Naive thymus-derived CD4-positive, alpha-beta T cell (primary cell): ENCODE measurements at regions of chr10 and their contacts with region 1.

Region 1: DNA sequence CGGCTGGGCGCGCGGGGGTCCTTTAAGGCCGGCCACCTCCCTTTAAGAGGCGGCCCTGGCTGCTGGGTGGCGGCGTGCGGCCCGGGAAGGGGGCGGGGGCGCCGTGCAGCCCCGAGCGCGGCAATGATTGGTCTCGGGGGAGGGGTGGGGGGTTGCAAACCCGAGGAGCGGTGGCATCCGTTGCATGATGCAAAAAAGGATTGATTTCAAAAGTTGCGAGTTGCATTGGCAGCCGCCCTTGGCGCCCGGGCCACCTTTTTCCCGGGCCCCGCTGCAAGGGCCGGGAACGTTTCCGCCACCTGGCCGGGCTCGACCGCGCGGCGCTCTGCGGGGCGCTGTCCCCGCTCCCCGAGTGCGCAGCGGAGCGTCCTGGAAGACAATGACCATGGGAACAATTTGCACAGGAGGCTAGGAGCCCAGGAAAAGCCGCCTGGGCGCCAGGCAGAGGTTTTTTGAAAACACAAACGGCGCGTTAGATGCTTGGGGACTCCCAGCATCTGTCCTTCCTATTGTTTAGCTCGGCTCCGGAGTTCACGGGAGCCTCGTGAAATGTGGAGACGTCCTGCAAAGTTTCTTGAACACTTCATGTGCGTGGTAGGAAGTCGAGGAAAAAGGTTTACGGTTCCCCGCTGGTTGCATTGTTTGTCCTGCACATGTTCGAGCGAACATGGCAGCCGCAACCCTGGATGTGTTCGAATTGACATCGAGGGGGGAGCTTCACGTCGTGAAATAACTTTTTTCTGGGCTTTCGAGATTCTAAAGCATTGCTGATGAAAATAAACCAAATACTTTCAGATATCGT is at the start of gene SEPHS1:
- DNase-seq: peak; percentile 62 to 87 (median 84)
- ATAC-seq: peak; percentile 83
- H3K4me3 ChIP-seq: peak within 1 kb of the TSS; percentile 95
- H3K4me3 Mint-ChIP-seq: peak within 1 kb of the TSS; percentile 92 to 99 (median 96)
- H3K27ac ChIP-seq: peak within 1 kb of the TSS; percentile 84
- H3K27ac Mint-ChIP-seq: peak within 1 kb of the TSS; percentile 90 to 98 (median 97)
- H3K4me1 ChIP-seq: peaks cover 18 to 36% of the 10 kb centered on the region in 2 donors
- H3K4me1 Mint-ChIP-seq: peaks cover 28 to 69% (median 62%) of the 10 kb centered on the region in 7 donors
- H3K27me3 ChIP-seq: no peaks in the 10 kb centered on the region
- H3K27me3 Mint-ChIP-seq: peaks cover 0 to 9% (median 0%) of the 10 kb centered on the region in 5 donors
- total RNA-seq, gene SEPHS1: 23.7 to 57.3 (median 36.5) TPM

Region 2: GRCh38 chr10:13099666-13100348 is 248.6 kb before region 1 on chr10 and contains the start of gene OPTN:
- CTCF ChIA-PET with region 1: interaction called, 4 read pairs
- POLR2A ChIA-PET with region 1: interaction called, 5 read pairs
- intact Hi-C with region 1: loop called (anchors 2 to 5 kb)
- DNase-seq: peak; percentile 61 to 85 (median 80)
- ATAC-seq: peak; percentile 90
- H3K4me3 ChIP-seq: peak within 1 kb of the TSS; percentile 82
- H3K4me3 Mint-ChIP-seq: peak within 1 kb of the TSS; percentile 83 to 97 (median 96)
- H3K27ac ChIP-seq: peak within 1 kb of the TSS; percentile 92
- H3K27ac Mint-ChIP-seq: peak within 1 kb of the TSS; percentile 88 to 98 (median 94)
- H3K4me1 ChIP-seq: peaks cover 6 to 21% of the 10 kb centered on the region in 2 donors
- H3K4me1 Mint-ChIP-seq: peaks cover 28 to 52% (median 49%) of the 10 kb centered on the region in 7 donors
- H3K27me3 ChIP-seq: no peaks in the 10 kb centered on the region
- H3K27me3 Mint-ChIP-seq: no peaks in the 10 kb centered on the region
- total RNA-seq, gene OPTN: 59.3 to 146 (median 60.0) TPM

Region 3: GRCh38 chr10:13206546-13207443 is 141.6 kb before region 1 on chr10:
- CTCF ChIA-PET with region 1: interaction called, 6 read pairs
- POLR2A ChIA-PET with region 1: no interaction called
- intact Hi-C with region 1: loop called in 1 of 2 experiments (anchors 1 kb)
- DNase-seq: no peak
- ATAC-seq: no peak
- H3K4me3 ChIP-seq: no peak overlapping the region
- H3K4me3 Mint-ChIP-seq: no peak overlapping the region
- H3K27ac ChIP-seq: no peak overlapping the region
- H3K27ac Mint-ChIP-seq: no peak overlapping the region
- H3K4me1 ChIP-seq: no peaks in the 10 kb centered on the region
- H3K4me1 Mint-ChIP-seq: no peaks in the 10 kb centered on the region
- H3K27me3 ChIP-seq: no peaks in the 10 kb centered on the region
- H3K27me3 Mint-ChIP-seq: no peaks in the 10 kb centered on the region

Region 4: DNA sequence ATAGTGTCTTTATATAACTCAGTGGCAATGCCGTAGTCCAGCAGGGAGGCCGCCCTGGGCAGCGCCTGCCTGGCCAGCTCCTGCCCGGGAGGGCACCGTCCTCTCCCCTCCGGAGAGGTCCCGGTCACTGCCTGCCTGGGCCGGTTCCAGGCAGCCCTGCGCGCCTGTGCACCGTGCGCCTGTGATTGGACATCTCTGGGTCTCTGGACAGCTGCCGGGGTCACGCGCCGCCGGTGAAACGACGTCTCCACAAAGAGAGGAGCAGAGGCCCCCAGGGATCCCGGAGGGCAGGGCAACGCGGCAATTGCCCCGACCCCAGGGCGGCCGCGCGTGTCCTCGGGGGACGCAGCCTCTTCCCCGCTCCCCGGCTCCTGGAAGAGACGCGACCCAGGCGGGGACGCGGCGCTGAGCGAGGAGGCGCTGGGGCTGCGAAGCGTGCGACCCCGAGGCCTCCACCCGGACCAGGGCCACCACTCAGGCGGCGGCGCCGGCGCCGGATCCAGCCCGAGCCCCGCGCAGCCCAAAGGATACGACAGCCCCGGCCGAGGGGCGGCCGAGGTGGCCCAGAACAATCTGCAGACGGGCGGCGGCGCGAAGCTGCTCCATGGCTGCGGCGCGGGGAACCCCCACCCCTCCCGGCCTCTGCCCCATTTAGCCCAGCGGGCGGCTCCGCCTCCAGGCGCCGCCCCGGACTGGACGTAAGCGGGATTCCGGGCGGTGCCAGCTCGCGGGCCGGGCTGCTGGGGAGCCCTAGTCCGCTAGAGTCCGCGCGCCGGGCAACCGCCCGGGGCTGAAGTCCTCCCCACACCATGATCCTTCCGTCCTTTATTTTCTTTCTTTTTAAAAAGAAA is 48.8 kb before region 1 on chr10 and contains the start of gene PHYH:
- CTCF ChIA-PET with region 1: interaction called, 18 read pairs
- POLR2A ChIA-PET with region 1: interaction called, 144 read pairs
- intact Hi-C with region 1: loop called (anchors 1 kb)
- DNase-seq: peak; percentile 70 to 88 (median 78)
- ATAC-seq: peak; percentile 77
- H3K4me3 ChIP-seq: peak within 1 kb of the TSS; percentile 69
- H3K4me3 Mint-ChIP-seq: peak within 1 kb of the TSS; percentile 70 to 96 (median 86)
- H3K27ac ChIP-seq: peak within 1 kb of the TSS; percentile 95
- H3K27ac Mint-ChIP-seq: peak within 1 kb of the TSS; percentile 92 to 99 (median 97)
- H3K4me1 ChIP-seq: peaks cover 16 to 19% of the 10 kb centered on the region in 2 donors
- H3K4me1 Mint-ChIP-seq: peaks cover 13 to 34% (median 22%) of the 10 kb centered on the region in 7 donors
- H3K27me3 ChIP-seq: no peaks in the 10 kb centered on the region
- H3K27me3 Mint-ChIP-seq: no peaks in the 10 kb centered on the region
- total RNA-seq, gene PHYH: 11.2 to 17.7 (median 13.2) TPM

Region 5: GRCh38 chr10:13371897-13372470 is 23.6 kb after region 1 on chr10:
- CTCF ChIA-PET with region 1: interaction called, 15 read pairs
- POLR2A ChIA-PET with region 1: interaction called, 6 read pairs
- intact Hi-C with region 1: loop called in 1 of 2 experiments (anchors 1 kb)
- DNase-seq: peak; percentile 31 to 81 (median 78)
- ATAC-seq: peak; percentile 99
- H3K4me3 ChIP-seq: no peak overlapping the region
- H3K4me3 Mint-ChIP-seq: no peak overlapping the region
- H3K27ac ChIP-seq: no peak overlapping the region
- H3K27ac Mint-ChIP-seq: no peak overlapping the region
- H3K4me1 ChIP-seq: no peaks in the 10 kb centered on the region
- H3K4me1 Mint-ChIP-seq: peaks cover 0 to 4% (median 0%) of the 10 kb centered on the region in 7 donors
- H3K27me3 ChIP-seq: no peaks in the 10 kb centered on the region
- H3K27me3 Mint-ChIP-seq: peaks cover 0 to 4% (median 0%) of the 10 kb centered on the region in 5 donors

Region 6: DNA sequence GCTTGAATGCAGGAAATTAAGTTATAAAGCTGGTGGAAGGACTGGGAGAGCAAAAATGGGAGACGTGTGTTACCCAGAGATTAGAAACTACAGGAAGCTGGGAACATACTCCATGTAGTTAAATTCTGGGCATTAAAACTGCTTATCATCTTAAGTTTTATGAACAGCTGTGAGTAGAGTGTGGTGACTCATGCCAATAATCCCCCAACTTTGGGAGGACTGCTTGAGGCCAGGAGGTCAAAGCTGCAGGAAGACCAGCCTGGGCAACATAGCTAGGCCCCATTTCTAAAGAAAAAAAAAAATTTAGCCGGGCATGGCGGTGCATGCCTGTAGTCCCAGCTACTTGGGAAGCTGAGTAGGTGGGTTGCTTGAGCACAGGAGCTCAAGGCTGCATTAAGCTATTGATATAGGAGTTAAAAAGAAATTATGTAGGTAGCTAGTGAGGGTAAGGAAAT is 55.9 kb after region 1 on chr10:
- CTCF ChIA-PET with region 1: no interaction called
- POLR2A ChIA-PET with region 1: no interaction called
- intact Hi-C with region 1: no loop called
- DNase-seq: no peak
- ATAC-seq: no peak
- H3K4me3 ChIP-seq: no peak overlapping the region
- H3K4me3 Mint-ChIP-seq: no peak overlapping the region
- H3K27ac ChIP-seq: no peak overlapping the region
- H3K27ac Mint-ChIP-seq: no peak overlapping the region
- H3K4me1 ChIP-seq: no peaks in the 10 kb centered on the region
- H3K4me1 Mint-ChIP-seq: no peaks in the 10 kb centered on the region
- H3K27me3 ChIP-seq: no peaks in the 10 kb centered on the region
- H3K27me3 Mint-ChIP-seq: peaks cover 2 to 19% (median 10%) of the 10 kb centered on the region in 5 donors

Region 7: DNA sequence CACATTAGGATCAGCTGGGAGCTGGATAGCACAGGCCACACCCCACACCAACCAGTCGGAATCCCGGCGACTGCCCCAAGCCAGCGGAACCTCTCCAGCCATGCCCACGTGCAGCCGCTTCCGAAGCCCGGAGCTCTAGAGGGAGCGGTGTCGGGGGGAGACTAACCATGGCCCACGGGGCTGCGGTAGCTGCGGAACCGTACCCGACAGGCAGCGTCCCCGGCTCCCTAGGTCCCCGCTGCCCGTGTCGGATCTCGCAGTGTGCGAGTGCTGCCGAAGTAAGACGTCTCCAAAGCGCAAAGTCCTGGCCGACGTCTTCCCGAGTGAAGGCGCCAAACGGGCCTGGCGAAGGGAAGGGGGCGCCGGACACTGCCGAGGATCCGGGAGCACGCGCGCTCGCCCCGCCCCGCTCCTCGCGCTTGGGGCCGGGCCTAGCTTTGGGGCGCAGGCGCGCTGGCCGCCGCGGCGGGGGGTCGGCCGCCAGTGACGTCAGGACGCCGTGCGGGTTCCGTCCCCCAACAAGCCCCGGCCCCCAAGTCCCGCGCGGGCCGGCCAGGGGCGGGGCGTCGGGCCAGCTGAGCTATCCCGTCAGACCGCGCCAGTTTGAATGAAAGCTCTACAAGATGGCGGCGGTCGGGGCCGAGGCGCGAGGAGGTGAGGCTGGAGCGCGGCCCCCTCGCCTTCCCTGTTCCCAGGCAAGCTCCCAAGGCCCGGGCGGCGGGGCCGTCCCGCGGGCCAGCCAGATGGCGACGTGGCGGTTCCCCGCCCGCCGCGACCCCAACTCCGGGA is 1530.0 kb after region 1 on chr10 and contains the start of gene SUV39H2:
- CTCF ChIA-PET with region 1: no interaction called
- POLR2A ChIA-PET with region 1: no interaction called
- intact Hi-C with region 1: loop called in 1 of 2 experiments (anchors 5 kb)
- DNase-seq: peak; percentile 81 to 97 (median 87)
- ATAC-seq: peak; percentile 93
- H3K4me3 ChIP-seq: peak within 1 kb of the TSS; percentile 92
- H3K4me3 Mint-ChIP-seq: peak within 1 kb of the TSS; percentile 92 to 97 (median 94)
- H3K27ac ChIP-seq: peak within 1 kb of the TSS; percentile 87
- H3K27ac Mint-ChIP-seq: peak within 1 kb of the TSS; percentile 71 to 94 (median 91)
- H3K4me1 ChIP-seq: peaks cover 4 to 7% of the 10 kb centered on the region in 2 donors
- H3K4me1 Mint-ChIP-seq: peaks cover 7 to 46% (median 41%) of the 10 kb centered on the region in 7 donors
- H3K27me3 ChIP-seq: no peaks in the 10 kb centered on the region
- H3K27me3 Mint-ChIP-seq: no peaks in the 10 kb centered on the region
- total RNA-seq, gene SUV39H2: 2.4 to 25.0 (median 6.8) TPM

Region 8: DNA sequence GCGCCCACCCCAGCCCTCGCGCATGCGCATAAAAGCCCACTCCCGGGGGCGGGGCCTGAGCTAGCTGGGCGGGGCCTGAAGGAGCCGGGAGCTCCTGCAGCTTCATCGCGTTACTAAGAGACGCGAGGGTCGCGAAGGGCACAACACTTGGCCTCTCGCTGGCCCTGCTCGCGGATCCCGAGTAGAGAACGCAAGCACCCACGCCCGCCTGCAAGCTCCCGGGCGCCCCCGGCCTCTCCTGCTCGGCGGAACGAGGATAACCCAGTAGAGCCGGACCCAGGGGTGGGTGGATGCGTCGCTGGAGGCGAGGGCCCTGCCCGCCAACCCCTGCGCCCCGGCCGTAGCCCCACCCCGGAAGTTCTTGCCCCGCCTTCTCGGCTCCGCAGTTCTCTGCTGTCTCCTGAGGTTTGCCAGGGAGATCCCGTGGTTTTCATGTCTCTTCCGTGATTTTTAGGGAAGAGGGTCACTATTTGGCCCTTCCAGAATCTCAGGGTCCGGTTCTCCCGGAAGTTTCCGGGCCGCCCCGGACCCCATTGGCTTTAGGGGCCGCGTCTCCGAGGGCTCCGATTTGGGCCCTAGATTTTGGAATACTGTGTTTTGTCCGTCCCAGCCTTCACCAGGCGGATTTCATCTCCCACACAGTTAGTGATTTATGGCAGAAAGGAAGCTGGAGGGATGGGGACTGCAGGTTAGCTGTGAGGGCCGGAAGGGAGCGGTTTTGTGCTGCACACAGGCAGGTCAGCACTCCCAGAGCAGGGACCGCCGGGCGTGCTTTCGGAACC is 1611.0 kb after region 1 on chr10 and contains the start of gene MEIG1:
- CTCF ChIA-PET with region 1: no interaction called
- POLR2A ChIA-PET with region 1: no interaction called
- intact Hi-C with region 1: loop called (anchors 1 to 5 kb)
- DNase-seq: peak; percentile 82 to 99 (median 90)
- ATAC-seq: peak; percentile 93
- H3K4me3 ChIP-seq: peak within 1 kb of the TSS; percentile 97
- H3K4me3 Mint-ChIP-seq: peak within 1 kb of the TSS; percentile 91 to 99 (median 96)
- H3K27ac ChIP-seq: peak within 1 kb of the TSS; percentile 81
- H3K27ac Mint-ChIP-seq: peak within 1 kb of the TSS; percentile 93 to 98 (median 96)
- H3K4me1 ChIP-seq: peaks cover 8 to 10% of the 10 kb centered on the region in 2 donors
- H3K4me1 Mint-ChIP-seq: peaks cover 6 to 42% (median 34%) of the 10 kb centered on the region in 7 donors
- H3K27me3 ChIP-seq: no peaks in the 10 kb centered on the region
- H3K27me3 Mint-ChIP-seq: no peaks in the 10 kb centered on the region
- total RNA-seq, gene MEIG1: 1.2 to 1.9 TPM in 2 of 5 experiments, not detected in the others